ENCODE measurements at regions of chr16 and their contacts with region 1.

Region 1: GRCh38 chr16:88737298-88738150 is 31.2 kb downstream of the CTU2 start:
- DNase-seq: peak; percentile 68
- H3K4me3 ChIP-seq: no peak overlapping the region
- H3K27ac ChIP-seq: no peak overlapping the region
- H3K4me1 ChIP-seq: no peaks in the 10 kb centered on the region
- H3K27me3 ChIP-seq: no peaks in the 10 kb centered on the region
- CTCF ChIP-seq: peak; percentile 99

Region 2: DNA sequence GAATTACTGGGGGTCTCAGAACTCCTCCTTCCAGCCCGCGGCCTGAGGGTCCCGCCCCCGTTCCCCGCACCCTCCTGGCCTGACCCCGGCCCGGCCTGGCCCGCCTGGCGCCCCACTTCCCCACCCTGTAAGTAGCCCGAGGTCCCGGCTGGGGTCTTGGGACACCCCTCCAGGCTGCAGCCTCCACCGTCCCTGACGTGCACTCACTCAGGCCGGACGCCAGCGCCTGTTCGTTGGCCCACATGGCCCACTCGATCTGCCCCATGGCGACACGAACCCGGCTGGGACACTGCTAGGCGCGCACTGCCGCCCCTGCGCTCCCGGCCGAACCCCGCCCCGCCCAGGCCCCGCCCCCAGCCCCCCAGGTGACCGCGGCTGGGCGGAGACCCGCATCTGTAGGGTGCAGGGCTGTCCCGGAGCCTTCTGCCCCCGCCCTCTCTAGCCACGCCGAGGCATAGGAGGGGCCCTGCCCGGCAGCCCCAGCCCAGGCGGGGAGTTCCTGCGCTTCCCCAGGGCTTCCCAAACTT is 86.7 kb before region 1 on chr16 and contains the start of gene CYBA:
- intact Hi-C with region 1: no loop called
- DNase-seq: peak; percentile 88
- H3K4me3 ChIP-seq: peak within 1 kb of the TSS; percentile 86
- H3K27ac ChIP-seq: peak within 1 kb of the TSS; percentile 88
- H3K4me1 ChIP-seq: peaks cover 8% of the 10 kb centered on the region
- H3K27me3 ChIP-seq: no peaks in the 10 kb centered on the region
- CTCF ChIP-seq: no peak
- total RNA-seq, gene CYBA: 368 to 389 TPM

Region 3: DNA sequence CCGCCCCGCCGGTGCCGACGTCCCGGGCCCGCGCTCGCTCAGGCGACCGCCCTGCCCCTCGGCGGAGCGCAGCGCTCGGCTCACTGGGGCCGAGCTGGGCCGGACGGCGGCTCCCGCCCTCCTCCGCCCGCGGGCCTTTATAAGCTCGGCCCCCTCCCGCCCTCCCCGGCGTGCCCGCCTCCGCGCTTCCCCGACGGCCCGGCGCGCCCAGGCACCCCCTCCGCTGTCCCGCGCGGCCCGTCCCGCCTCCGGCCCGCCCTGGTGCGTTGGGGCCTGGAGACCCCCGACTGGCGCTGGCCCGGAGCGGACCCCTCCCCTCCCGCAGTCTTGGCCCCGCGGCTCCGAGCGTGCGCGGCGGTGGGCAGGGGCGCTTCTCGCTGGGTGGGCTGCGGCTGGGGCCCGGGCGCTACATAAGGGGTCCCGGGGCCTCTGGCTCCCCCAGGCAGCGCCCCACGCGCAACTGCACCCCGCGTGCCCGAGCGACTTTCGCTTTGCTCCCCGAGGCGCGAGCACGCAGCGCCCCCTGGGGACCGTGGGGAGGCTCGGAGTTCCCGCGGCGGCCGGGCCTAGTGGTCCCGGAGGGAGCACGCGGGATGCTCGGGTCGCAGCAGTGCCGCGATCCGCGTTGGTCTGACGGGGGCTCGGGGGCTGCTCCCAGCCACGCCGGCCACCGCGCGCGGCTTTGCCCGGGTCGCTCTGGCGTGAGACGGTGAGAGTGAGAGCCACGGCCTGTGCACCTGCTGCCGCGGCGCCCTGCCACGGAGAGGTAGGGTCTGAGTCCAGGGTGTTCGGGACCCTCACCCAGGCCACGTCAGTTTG is 47.8 kb after region 1 on chr16 and contains the start of gene PIEZO1:
- intact Hi-C with region 1: loop called (anchors 2 kb)
- DNase-seq: peak; percentile 82
- H3K4me3 ChIP-seq: peak within 1 kb of the TSS; percentile 71
- H3K27ac ChIP-seq: peak within 1 kb of the TSS; percentile 73
- H3K4me1 ChIP-seq: peaks cover 6% of the 10 kb centered on the region
- H3K27me3 ChIP-seq: no peaks in the 10 kb centered on the region
- CTCF ChIP-seq: peak; percentile 94
- total RNA-seq, gene PIEZO1: 104 to 118 TPM

Measured in colonic mucosa (tissue), 4 donors.